Heart right ventricle (tissue), 16 donors: ENCODE measurements at regions of chr22 and their contacts with region 1.

Region 1: GRCh38 chr22:44293876-44294275 is 18.9 kb downstream of the SHISAL1 start:
- DNase-seq: no peak
- ATAC-seq: no peak
- H3K4me3 ChIP-seq: no peak overlapping the region
- H3K27ac ChIP-seq: no peak overlapping the region
- H3K4me1 ChIP-seq: peaks cover 0 to 6% (median 0%) of the 10 kb centered on the region in 9 donors
- H3K27me3 ChIP-seq: peaks cover 0 to 7% (median 0%) of the 10 kb centered on the region in 7 donors
- CTCF ChIP-seq: no peak

Region 2: DNA sequence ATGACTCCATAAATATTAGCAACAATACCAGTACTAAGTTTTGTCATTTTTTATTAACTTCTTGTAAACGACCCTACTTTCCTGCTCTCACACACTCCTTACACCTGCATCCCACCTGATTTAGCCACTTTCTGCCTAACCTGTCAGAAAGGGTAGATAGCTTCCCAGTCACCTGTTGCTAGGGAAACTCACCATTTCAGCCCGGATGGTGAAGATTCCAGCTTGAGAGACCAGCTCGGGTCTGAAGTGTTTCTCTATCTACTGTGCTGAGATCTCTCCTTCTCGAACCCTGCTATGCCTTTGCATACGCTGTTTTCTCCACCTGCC is 113.2 kb before region 1 on chr22 and contains the start of gene PARVG:
- intact Hi-C with region 1: loop called in 1 of 10 experiments (anchors 1 kb)
- DNase-seq: no peak
- ATAC-seq: no peak
- H3K4me3 ChIP-seq: peak within 1 kb of the TSS in 8 of 10 donors; percentile 2 to 69 (median 31)
- H3K27ac ChIP-seq: peak within 1 kb of the TSS in 8 of 10 donors; percentile 0 to 96 (median 44)
- H3K4me1 ChIP-seq: peaks cover 0 to 12% (median 0%) of the 10 kb centered on the region in 9 donors
- H3K27me3 ChIP-seq: peaks cover 0 to 55% (median 24%) of the 10 kb centered on the region in 7 donors
- CTCF ChIP-seq: no peak
- total RNA-seq, gene PARVG: 0.90 to 16.2 (median 1.9) TPM

Region 3: DNA sequence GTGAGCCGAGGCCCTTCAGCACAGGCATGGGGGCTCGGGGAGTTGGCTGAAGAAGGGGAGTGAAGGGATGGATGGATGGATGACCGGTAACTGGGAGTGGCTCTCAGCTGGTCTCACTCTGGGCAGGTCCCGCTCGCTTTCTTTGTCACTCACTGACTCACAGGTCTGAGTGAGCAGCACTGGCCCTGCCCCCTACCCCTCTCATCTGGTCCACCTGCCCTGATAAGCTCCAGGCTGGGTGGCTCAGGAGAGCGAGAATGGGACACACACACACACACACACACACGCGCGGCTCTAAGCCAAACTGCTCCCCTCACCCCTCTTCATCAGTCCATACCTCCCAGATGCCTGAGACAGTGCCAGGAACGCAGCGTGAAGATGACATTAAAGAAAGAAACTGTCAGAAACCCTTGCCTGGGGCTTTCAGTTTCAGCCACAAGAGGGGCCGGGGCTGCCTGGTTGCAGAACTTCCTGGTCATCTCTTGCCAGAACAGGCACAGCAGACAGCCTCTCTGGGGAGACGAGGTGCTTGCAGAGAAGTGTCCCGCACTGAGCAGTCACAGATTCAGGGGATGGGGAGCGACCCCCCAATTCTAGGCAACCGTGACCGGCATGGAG is 35.4 kb after region 1 on chr22:
- intact Hi-C with region 1: no loop called
- DNase-seq: no peak
- ATAC-seq: no peak
- H3K4me3 ChIP-seq: no peak overlapping the region
- H3K27ac ChIP-seq: no peak overlapping the region
- H3K4me1 ChIP-seq: peaks cover 4 to 23% (median 15%) of the 10 kb centered on the region in 9 donors
- H3K27me3 ChIP-seq: peaks cover 8 to 68% (median 41%) of the 10 kb centered on the region in 7 donors
- CTCF ChIP-seq: no peak